ENCODE measurements at regions of chr14 and their contacts with region 1.

Region 1: GRCh38 chr14:74762917-74763802 is at the start of gene YLPM1:
- DNase-seq: peak; percentile 95
- ATAC-seq: peak; percentile 92
- H3K4me3 Mint-ChIP-seq: peak within 1 kb of the TSS; percentile 96
- H3K27ac Mint-ChIP-seq: peak within 1 kb of the TSS; percentile 97
- H3K4me1 Mint-ChIP-seq: peaks cover 42% of the 10 kb centered on the region
- H3K27me3 Mint-ChIP-seq: no peaks in the 10 kb centered on the region
- total RNA-seq, gene YLPM1: 53.0 to 60.9 TPM

Region 2: GRCh38 chr14:74302634-74303577 is 460.3 kb before region 1 on chr14 and contains the start of gene ABCD4:
- CTCF ChIA-PET with region 1: no interaction called
- POLR2A ChIA-PET with region 1: no interaction called
- intact Hi-C with region 1: loop called in 1 of 2 experiments (anchors 2 kb)
- DNase-seq: peak; percentile 91
- ATAC-seq: peak; percentile 95
- H3K4me3 Mint-ChIP-seq: peak within 1 kb of the TSS; percentile 98
- H3K27ac Mint-ChIP-seq: peak within 1 kb of the TSS; percentile 98
- H3K4me1 Mint-ChIP-seq: peaks cover 32% of the 10 kb centered on the region
- H3K27me3 Mint-ChIP-seq: no peaks in the 10 kb centered on the region
- total RNA-seq, gene ABCD4: 43.0 to 43.1 TPM

Region 3: GRCh38 chr14:74793506-74794168 is 30.5 kb after region 1 on chr14:
- CTCF ChIA-PET with region 1: no interaction called
- POLR2A ChIA-PET with region 1: no interaction called
- intact Hi-C with region 1: loop called in 1 of 2 experiments (anchors 1 kb)
- DNase-seq: peak; percentile 19
- ATAC-seq: peak; percentile 61
- H3K4me3 Mint-ChIP-seq: peak overlapping the region; percentile 48
- H3K27ac Mint-ChIP-seq: peak overlapping the region; percentile 82
- H3K4me1 Mint-ChIP-seq: peaks cover 43% of the 10 kb centered on the region
- H3K27me3 Mint-ChIP-seq: no peaks in the 10 kb centered on the region

Region 4: GRCh38 chr14:74881431-74882361 is 118.5 kb after region 1 on chr14 and contains the start of gene DLST:
- CTCF ChIA-PET with region 1: interaction called, 3 read pairs
- POLR2A ChIA-PET with region 1: interaction called, 3 read pairs
- intact Hi-C with region 1: loop called in 1 of 2 experiments (anchors 1 kb)
- DNase-seq: peak; percentile 92
- ATAC-seq: peak; percentile 89
- H3K4me3 Mint-ChIP-seq: peak within 1 kb of the TSS; percentile 99
- H3K27ac Mint-ChIP-seq: peak within 1 kb of the TSS; percentile 96
- H3K4me1 Mint-ChIP-seq: peaks cover 64% of the 10 kb centered on the region
- H3K27me3 Mint-ChIP-seq: no peaks in the 10 kb centered on the region
- total RNA-seq, gene DLST: 103 to 120 TPM

Region 5: DNA sequence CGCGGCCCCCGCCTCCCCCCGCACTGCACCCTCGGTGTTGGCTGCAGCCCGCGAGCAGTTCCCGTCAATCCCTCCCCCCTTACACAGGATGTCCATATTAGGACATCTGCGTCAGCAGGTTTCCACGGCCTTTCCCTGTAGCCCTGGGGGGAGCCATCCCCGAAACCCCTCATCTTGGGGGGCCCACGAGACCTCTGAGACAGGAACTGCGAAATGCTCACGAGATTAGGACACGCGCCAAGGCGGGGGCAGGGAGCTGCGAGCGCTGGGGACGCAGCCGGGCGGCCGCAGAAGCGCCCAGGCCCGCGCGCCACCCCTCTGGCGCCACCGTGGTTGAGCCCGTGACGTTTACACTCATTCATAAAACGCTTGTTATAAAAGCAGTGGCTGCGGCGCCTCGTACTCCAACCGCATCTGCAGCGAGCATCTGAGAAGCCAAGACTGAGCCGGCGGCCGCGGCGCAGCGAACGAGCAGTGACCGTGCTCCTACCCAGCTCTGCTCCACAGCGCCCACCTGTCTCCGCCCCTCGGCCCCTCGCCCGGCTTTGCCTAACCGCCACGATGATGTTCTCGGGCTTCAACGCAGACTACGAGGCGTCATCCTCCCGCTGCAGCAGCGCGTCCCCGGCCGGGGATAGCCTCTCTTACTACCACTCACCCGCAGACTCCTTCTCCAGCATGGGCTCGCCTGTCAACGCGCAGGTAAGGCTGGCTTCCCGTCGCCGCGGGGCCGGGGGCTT is 515.4 kb after region 1 on chr14 and contains the start of gene FOS:
- CTCF ChIA-PET with region 1: no interaction called
- POLR2A ChIA-PET with region 1: no interaction called
- intact Hi-C with region 1: loop called in 1 of 2 experiments (anchors 10 kb)
- DNase-seq: peak; percentile 92
- ATAC-seq: peak; percentile 91
- H3K4me3 Mint-ChIP-seq: peak within 1 kb of the TSS; percentile 85
- H3K27ac Mint-ChIP-seq: peak within 1 kb of the TSS; percentile 95
- H3K4me1 Mint-ChIP-seq: peaks cover 44% of the 10 kb centered on the region
- H3K27me3 Mint-ChIP-seq: peaks cover 24% of the 10 kb centered on the region
- total RNA-seq, gene FOS: 16.0 to 21.1 TPM

Measured in activated CD4-positive, alpha-beta T cell treated with anti-CD3 and anti-CD28 coated beads for 36 hours (primary cell).